Tibial artery (tissue), 4 donors: ENCODE measurements at regions of chr10 and their contacts with region 1.

Region 1: DNA sequence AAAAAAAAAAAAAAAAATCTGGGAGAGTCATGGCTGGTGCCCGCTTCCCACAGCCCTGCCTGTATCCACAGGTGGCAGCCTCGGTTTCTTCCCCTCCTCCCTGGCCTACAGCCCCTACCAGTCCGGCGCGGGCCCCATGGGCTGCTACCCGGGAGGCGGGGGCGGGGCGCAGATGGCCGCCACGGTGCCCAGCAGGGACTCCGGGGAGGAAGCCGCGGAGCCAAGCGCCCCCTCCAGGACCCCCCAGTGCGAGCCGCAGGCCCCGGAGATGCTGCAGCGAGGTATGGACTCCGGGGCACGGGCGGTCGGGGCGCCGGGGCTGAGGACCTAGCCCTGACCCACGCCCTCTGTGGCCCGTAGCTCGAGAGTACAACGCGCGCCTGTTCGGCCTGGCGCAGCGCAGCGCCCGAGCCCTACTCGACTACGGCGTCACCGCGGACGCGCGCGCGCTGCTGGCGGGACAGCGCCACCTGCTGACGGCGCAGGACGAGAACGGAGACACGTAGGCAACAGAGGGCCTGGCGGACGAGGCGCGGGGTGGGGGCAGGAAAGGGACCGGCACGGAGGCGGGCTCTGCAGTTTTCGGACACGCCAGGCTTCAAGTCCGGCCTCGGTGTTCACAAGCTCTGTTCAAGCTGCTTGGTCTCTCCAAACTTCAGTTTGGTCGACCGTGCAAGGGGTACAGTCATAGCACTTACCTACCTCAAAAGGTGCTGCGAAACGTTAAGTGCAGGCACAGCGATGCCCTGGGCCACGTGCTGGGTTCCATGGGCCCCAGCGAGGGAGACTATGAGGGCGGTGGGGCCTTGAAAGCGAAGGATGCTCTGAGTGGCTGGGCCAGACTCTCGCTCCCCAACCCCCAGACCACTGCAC is 3.9 kb downstream of the NFKB2 start:
- DNase-seq: peak; percentile 86 to 93
- H3K4me3 ChIP-seq: peak overlapping the region; percentile 57 to 64
- H3K27ac ChIP-seq: peak overlapping the region; percentile 71 to 89
- H3K4me1 ChIP-seq: peaks cover 5 to 41% (median 24%) of the 10 kb centered on the region in 4 donors
- H3K27me3 ChIP-seq: no peaks in the 10 kb centered on the region
- CTCF ChIP-seq: peak; percentile 94 to 95

Region 2: GRCh38 chr10:102055647-102056419 is 343.6 kb before region 1 on chr10 and contains the start of gene ARMH3:
- intact Hi-C with region 1: no loop called
- DNase-seq: peak; percentile 95 to 96
- H3K4me3 ChIP-seq: peak within 1 kb of the TSS; percentile 64 to 83
- H3K27ac ChIP-seq: peak within 1 kb of the TSS; percentile 91 to 96
- H3K4me1 ChIP-seq: peaks cover 0 to 33% (median 12%) of the 10 kb centered on the region in 4 donors
- H3K27me3 ChIP-seq: no peaks in the 10 kb centered on the region
- CTCF ChIP-seq: peak in 1 of 2 experiments; percentile 17

Region 3: DNA sequence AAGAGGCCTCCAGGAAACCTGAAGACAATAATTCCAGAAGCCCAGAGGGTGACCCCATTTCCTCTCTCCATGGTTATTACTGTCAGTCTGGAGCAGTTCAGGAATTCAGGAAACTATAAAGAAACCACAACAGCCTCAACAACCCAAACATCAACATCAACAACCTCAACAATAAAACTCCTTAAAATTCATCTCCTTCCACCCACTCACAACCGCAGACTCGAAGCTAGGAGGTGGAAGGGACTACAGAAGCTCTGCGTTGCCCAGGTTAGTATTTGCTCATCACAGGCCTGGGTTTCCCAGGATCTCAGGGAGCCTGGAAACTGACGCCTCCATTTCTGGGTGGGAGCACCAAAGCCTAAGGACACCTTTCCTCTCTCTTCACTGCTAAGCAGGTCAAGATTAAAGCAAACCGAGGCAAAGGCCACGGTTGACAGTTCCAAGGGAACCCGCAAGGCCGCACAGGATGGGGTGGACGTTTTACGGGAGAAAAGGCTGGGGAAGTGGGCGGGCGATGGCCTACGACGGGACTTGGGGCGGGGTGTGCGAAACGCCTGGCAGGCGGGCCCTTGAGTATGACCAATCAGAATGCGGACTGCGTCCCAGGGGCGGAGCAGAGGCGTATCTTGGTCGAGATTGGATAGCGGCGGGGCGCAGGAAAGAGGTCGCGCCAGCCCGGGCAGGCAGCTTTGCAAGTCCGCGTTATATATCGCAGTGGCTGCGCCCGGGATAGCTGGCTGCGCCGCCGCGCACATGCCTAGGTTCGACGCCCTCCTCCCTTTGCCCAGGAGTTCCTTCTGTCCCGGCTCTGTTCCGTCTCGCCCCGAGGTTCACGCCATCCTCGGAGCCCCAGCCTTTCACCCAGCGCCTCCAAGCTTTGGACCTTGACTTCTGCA is 173.6 kb before region 1 on chr10 and contains the start of gene ELOVL3:
- intact Hi-C with region 1: no loop called
- DNase-seq: peak; percentile 92 to 93
- H3K4me3 ChIP-seq: peak within 1 kb of the TSS; percentile 24 to 36
- H3K27ac ChIP-seq: peak within 1 kb of the TSS; percentile 52 to 54
- H3K4me1 ChIP-seq: peaks cover 0 to 26% (median 26%) of the 10 kb centered on the region in 4 donors
- H3K27me3 ChIP-seq: peaks cover 0 to 32% of the 10 kb centered on the region in 2 donors
- CTCF ChIP-seq: peak in 1 of 2 experiments; percentile 9

Region 4: DNA sequence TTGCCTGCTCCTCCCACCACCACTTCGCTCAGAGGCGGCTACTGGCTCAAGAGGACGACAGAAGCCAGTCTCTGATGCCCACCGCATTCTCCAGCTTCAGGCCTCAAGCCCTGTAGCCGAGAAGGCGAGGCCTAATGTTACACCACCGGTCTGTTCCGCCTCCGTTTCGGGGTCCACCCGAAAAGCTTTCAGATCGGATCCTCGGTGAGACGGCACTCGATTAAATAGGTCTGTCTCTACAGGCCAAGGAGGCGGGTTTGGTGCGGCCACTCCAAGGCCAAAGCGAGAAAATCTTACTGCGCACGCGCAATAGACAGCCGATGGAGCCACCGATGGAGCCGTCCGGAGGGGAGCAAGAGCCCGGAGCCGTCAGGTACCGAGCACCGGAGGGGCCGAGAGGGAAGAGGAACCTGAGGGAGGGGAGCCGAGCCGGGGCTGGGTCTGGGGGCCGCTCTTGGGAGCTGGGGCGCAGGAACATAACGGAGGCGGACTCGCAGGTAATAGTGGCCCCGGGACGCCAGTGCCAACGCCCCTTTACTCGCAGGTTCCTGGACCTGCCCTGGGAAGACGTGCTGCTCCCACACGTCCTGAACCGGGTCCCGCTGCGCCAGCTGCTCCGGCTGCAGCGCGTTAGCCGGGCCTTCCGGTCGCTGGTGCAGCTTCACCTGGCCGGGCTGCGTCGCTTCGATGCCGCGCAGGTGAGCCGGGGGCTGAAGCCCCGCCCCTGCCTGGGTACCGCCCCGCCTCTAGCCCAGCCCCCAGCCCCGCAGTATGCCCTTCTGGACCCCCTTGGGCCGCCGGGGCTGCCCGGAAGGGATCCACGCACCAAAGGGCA is 21.6 kb after region 1 on chr10 and contains the start of gene FBXL15:
- intact Hi-C with region 1: loop called (anchors 1 kb)
- DNase-seq: peak; percentile 98
- H3K4me3 ChIP-seq: peak within 1 kb of the TSS; percentile 71 to 86
- H3K27ac ChIP-seq: peak within 1 kb of the TSS; percentile 77 to 90
- H3K4me1 ChIP-seq: peaks cover 5 to 47% (median 35%) of the 10 kb centered on the region in 4 donors
- H3K27me3 ChIP-seq: peaks cover 0 to 28% of the 10 kb centered on the region in 2 donors
- CTCF ChIP-seq: no peak

Region 5: GRCh38 chr10:102450194-102450938 is 50.9 kb after region 1 on chr10:
- intact Hi-C with region 1: no loop called
- DNase-seq: peak; percentile 68 to 85
- H3K4me3 ChIP-seq: peak overlapping the region; percentile 69 to 93
- H3K27ac ChIP-seq: peak overlapping the region; percentile 80 to 81
- H3K4me1 ChIP-seq: peaks cover 0 to 24% (median 14%) of the 10 kb centered on the region in 4 donors
- H3K27me3 ChIP-seq: peaks cover 0 to 3% of the 10 kb centered on the region in 2 donors
- CTCF ChIP-seq: no peak

Region 6: GRCh38 chr10:102476466-102477141 is 77.2 kb after region 1 on chr10:
- intact Hi-C with region 1: loop called (anchors 5 kb)
- DNase-seq: no peak
- H3K4me3 ChIP-seq: no peak overlapping the region
- H3K27ac ChIP-seq: no peak overlapping the region
- H3K4me1 ChIP-seq: no peaks in the 10 kb centered on the region
- H3K27me3 ChIP-seq: no peaks in the 10 kb centered on the region
- CTCF ChIP-seq: no peak